SK-N-SH (cell line): ENCODE measurements at regions of chr19 and their contacts with region 1.

Region 1: DNA sequence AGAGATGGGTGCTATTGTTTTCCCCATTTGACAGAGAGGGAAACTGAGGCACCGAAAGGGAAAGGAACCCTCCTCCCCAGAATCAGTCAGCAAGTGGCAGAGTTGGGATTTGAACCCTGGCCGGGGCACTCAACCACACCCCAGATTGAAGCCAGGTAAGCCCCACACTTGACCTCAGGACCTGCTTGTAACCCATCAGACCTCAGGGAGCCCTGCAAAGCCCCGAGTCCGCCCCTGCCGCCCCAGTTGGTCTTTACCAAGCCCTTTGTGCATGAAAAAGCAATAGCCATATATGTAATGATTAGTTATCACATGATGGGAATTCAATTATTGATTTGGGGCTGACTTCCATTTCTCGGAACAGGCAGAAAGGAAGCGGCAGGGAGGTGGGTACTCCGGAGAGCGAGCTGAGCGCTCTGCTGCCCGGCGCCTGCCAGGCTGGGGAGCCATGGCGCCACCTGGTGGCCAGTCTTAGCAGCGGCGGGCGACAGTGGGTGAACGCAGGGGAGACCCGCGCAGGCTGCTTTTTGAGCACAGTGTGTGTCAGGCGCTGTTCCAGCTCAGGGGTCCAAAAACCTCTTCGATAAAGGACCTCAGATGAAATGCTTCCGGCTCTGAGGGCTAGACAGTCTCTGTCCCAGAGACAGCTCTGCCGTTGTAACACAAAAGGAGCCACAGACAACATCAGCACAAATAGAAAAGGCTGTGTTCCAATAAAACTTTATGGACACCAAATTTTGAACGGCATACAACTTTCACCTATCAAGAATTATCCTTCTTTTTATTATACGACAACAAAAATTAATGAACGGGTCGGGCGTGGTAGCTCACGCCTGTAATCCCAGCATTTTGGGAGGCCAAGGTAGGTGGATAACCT is 82.9 kb upstream of the CACNA1A start:
- DNase-seq: peak; percentile 84
- H3K4me3 ChIP-seq: no peak overlapping the region; a peak in 1 of 4 replicates
- H3K27ac ChIP-seq: no peak overlapping the region
- H3K4me1 ChIP-seq: no peaks in the 10 kb centered on the region
- H3K27me3 ChIP-seq: peaks cover 30% of the 10 kb centered on the region
- CTCF ChIP-seq: peak; percentile 91
- EP300 ChIP-seq: no peak
- RAD21 ChIP-seq: peak; percentile 71

Region 2: GRCh38 chr19:13269348-13269747 is 319.8 kb before region 1 on chr19:
- CTCF ChIA-PET with region 1: interaction called, 10 read pairs
- POLR2A ChIA-PET with region 1: no interaction called
- DNase-seq: no peak
- H3K4me3 ChIP-seq: no peak overlapping the region
- H3K27ac ChIP-seq: no peak overlapping the region
- H3K4me1 ChIP-seq: no peaks in the 10 kb centered on the region
- H3K27me3 ChIP-seq: peaks cover 80% of the 10 kb centered on the region; the same call in 1 of the 2 replicates
- CTCF ChIP-seq: no peak
- EP300 ChIP-seq: no peak
- RAD21 ChIP-seq: no peak

Region 3: GRCh38 chr19:13526552-13526951 is 62.6 kb before region 1 on chr19:
- CTCF ChIA-PET with region 1: no interaction called
- POLR2A ChIA-PET with region 1: no interaction called
- DNase-seq: no peak
- H3K4me3 ChIP-seq: no peak overlapping the region
- H3K27ac ChIP-seq: no peak overlapping the region
- H3K4me1 ChIP-seq: no peaks in the 10 kb centered on the region
- H3K27me3 ChIP-seq: no peaks in the 10 kb centered on the region; the same call in 1 of the 2 replicates
- CTCF ChIP-seq: peak; percentile 39
- EP300 ChIP-seq: no peak
- RAD21 ChIP-seq: no peak

Region 4: DNA sequence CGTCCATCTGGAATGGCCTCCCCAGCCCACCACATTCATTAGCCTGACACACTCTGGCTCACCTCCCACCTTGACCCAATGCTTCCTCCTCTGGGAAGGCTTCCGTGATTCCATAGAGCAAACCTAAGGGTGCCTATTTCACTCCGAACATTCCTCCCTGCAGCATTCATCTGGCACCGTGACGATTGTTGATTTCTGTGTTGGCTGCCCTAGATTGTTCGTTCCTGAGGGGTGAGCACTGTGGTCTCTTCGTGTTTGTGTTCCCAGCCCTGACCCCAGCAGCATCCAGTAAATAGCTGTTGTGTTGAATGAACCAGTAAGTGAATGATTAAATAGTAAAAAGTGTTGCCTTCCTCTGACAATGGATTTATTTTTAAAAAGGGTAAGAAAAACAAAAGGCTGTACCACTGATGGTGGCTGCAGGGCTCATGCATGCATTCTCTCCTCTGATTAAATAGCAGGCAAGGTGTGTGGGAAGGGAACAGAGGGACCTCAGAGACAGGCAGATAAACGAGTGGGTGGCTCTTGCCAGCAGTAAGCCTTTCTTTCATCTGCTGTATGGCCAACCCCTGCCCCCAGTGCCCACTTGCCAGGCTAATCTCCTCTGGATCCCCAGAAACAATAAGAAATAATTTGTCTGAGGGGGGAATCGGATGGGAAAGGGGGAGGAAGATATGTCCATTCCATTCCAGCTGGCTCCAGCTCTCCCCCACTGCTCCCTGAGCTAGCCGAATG is 34.5 kb before region 1 on chr19:
- CTCF ChIA-PET with region 1: no interaction called
- POLR2A ChIA-PET with region 1: no interaction called
- DNase-seq: no peak
- H3K4me3 ChIP-seq: no peak overlapping the region
- H3K27ac ChIP-seq: no peak overlapping the region
- H3K4me1 ChIP-seq: no peaks in the 10 kb centered on the region
- H3K27me3 ChIP-seq: peaks cover 37% of the 10 kb centered on the region
- CTCF ChIP-seq: no peak
- EP300 ChIP-seq: no peak
- RAD21 ChIP-seq: no peak

Region 5: DNA sequence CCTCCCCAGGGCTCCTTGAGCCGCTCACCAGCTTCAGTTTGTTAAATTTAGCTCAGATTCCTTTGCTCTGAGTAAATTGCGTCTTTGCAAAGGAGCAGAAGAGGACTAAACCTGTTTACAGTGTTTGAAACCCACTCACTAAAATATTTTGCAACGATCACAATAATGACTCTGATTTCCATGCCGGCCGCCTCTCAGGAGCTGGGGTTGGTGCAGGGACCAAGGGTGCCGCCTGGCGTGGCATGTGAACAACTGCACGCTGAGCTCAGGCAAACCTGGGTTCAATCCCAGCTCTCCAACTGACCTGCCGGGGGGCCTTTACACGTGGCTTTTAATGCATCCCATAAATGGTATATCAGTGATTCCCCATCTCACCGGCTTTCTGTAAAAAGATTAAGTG is 14.3 kb before region 1 on chr19:
- CTCF ChIA-PET with region 1: interaction called, 31 read pairs
- POLR2A ChIA-PET with region 1: no interaction called
- DNase-seq: peak; percentile 43
- H3K4me3 ChIP-seq: no peak overlapping the region
- H3K27ac ChIP-seq: no peak overlapping the region
- H3K4me1 ChIP-seq: no peaks in the 10 kb centered on the region
- H3K27me3 ChIP-seq: peaks cover 39% of the 10 kb centered on the region
- CTCF ChIP-seq: peak; percentile 54
- EP300 ChIP-seq: no peak
- RAD21 ChIP-seq: peak; percentile 52

Region 6: GRCh38 chr19:13604902-13605586 is 15.8 kb after region 1 on chr19:
- CTCF ChIA-PET with region 1: interaction called, 15 read pairs
- POLR2A ChIA-PET with region 1: no interaction called
- DNase-seq: no peak
- H3K4me3 ChIP-seq: no peak overlapping the region
- H3K27ac ChIP-seq: no peak overlapping the region
- H3K4me1 ChIP-seq: peaks cover 0 to 4% of the 10 kb centered on the region in 2 experiments; a peak in 1 of 4 replicates
- H3K27me3 ChIP-seq: peaks cover 61% of the 10 kb centered on the region; the same call in 1 of the 2 replicates
- CTCF ChIP-seq: no peak
- EP300 ChIP-seq: no peak
- RAD21 ChIP-seq: no peak

Region 7: GRCh38 chr19:13742756-13743155 is 153.6 kb after region 1 on chr19:
- CTCF ChIA-PET with region 1: no interaction called
- POLR2A ChIA-PET with region 1: no interaction called
- DNase-seq: no peak
- H3K4me3 ChIP-seq: no peak overlapping the region
- H3K27ac ChIP-seq: no peak overlapping the region
- H3K4me1 ChIP-seq: no peaks in the 10 kb centered on the region
- H3K27me3 ChIP-seq: no peaks in the 10 kb centered on the region
- CTCF ChIP-seq: no peak
- EP300 ChIP-seq: no peak
- RAD21 ChIP-seq: no peak

Region 8: DNA sequence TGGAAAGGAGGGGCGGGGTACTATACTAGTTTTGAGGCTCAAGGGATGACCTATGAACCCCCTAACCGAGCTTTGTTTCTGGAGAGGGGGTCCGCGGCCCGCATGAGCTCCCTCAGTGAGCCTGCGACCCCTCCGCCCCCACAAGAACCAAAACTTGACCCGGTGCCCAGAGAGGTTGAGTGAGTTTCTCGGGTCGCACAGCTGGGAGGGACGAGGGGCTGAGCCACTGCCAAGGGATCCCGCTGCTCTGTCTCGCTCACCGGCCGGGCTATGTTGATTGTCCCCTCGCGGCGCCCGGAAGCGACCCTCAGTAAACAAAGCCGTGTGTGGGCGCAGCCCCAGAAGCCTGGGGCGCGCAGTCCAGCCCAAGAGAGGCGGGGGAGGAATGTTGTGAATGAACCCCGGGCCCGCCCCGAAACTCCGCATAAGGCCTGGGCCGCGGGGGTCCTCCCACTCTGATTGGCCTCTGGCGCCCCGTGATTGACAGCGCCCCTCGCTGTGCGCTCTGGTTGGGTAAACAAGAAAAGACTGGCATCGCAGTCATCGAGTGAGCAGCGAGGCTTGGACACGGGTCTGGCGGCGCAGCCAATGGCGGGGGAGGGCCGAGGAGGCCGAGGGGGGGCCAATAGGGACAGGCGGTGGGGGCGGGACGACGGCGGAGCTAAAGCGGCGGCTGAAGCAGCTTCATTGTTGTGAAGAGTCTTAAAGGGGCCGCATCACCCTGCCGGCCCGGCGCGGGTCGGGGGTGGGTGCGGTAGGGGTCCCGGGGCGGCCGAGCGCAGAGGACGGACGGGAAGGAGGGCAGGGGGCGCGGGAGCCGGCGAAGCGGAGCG is 205.8 kb after region 1 on chr19 and contains the start of gene ZSWIM4:
- CTCF ChIA-PET with region 1: no interaction called
- POLR2A ChIA-PET with region 1: no interaction called
- DNase-seq: peak; percentile 98
- H3K4me3 ChIP-seq: peak within 1 kb of the TSS; percentile 76 to 98
- H3K27ac ChIP-seq: peak within 1 kb of the TSS; percentile 88 to 99
- H3K4me1 ChIP-seq: peaks cover 15 to 18% of the 10 kb centered on the region in 2 experiments; a peak in 3 of 4 replicates
- H3K27me3 ChIP-seq: no peaks in the 10 kb centered on the region
- CTCF ChIP-seq: no peak
- EP300 ChIP-seq: no peak
- RAD21 ChIP-seq: no peak
- polyA plus RNA-seq, gene ZSWIM4: 3.5 and 4.7 TPM in 2 replicates